ENCODE measurements at regions of chr12 and their contacts with region 1.

Region 1: DNA sequence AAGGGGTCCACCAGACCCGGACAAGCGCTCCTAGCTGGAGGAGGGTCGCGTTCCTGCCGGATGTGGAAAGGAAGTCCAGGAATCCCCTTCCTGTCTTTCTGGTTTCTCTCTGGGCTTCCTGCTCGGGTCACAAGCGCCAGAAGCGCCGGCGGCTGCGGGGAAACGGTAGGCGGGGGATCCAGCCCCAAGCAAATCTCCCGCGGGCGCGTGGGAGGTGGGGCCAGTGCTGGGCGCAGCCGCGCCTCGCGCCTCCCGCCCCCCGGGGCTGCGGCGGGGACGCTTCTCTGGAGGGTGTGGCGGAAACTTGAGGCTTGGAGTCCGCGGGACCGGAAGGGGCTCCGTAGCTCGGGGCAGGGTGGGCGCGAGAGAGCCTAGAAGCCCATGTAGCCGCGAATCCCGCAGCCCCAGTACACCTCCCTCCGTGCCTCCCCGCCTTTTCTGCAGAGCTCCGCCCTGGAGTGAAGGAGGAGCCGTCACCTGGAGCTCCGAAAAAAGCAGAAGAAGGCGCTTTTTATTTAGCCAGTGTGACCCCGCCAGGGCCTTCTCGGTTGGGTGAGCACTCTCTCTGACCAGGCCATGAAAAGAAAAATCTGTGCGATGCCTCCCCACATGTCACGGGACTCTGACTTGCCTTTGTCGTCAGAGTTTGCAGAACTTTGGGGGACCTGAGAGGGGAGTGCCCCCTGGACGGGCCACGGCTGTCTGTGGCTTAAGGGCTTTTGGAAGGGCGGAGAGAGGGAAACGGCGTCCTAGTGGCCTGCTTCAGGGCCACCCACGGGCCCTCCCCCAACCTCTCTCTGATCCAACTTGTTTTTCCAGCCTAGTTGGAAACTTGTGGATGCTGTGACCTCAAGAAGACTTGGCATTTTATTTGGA is 21.4 kb upstream of the CLEC2D start:
- DNase-seq: peak; percentile 85 to 97
- H3K4me3 ChIP-seq: peak overlapping the region; percentile 81
- H3K27ac ChIP-seq: peak overlapping the region; percentile 88
- H3K4me1 ChIP-seq: peaks cover 40% of the 10 kb centered on the region
- H3K27me3 ChIP-seq: no peaks in the 10 kb centered on the region
- CTCF ChIP-seq: 0 out of 2 replicates have a peak, but pooled peaks have one; percentile 10

Region 2: GRCh38 chr12:9662500-9662899 is 14.4 kb after region 1 on chr12:
- CTCF ChIA-PET with region 1: no interaction called
- POLR2A ChIA-PET with region 1: interaction called, 12 read pairs
- intact Hi-C with region 1: loop called (anchors 1 kb)
- DNase-seq: peak; percentile 63 to 87
- H3K4me3 ChIP-seq: no peak overlapping the region
- H3K27ac ChIP-seq: peak overlapping the region; percentile 43
- H3K4me1 ChIP-seq: peaks cover 27% of the 10 kb centered on the region
- H3K27me3 ChIP-seq: no peaks in the 10 kb centered on the region
- CTCF ChIP-seq: no peak

Region 3: DNA sequence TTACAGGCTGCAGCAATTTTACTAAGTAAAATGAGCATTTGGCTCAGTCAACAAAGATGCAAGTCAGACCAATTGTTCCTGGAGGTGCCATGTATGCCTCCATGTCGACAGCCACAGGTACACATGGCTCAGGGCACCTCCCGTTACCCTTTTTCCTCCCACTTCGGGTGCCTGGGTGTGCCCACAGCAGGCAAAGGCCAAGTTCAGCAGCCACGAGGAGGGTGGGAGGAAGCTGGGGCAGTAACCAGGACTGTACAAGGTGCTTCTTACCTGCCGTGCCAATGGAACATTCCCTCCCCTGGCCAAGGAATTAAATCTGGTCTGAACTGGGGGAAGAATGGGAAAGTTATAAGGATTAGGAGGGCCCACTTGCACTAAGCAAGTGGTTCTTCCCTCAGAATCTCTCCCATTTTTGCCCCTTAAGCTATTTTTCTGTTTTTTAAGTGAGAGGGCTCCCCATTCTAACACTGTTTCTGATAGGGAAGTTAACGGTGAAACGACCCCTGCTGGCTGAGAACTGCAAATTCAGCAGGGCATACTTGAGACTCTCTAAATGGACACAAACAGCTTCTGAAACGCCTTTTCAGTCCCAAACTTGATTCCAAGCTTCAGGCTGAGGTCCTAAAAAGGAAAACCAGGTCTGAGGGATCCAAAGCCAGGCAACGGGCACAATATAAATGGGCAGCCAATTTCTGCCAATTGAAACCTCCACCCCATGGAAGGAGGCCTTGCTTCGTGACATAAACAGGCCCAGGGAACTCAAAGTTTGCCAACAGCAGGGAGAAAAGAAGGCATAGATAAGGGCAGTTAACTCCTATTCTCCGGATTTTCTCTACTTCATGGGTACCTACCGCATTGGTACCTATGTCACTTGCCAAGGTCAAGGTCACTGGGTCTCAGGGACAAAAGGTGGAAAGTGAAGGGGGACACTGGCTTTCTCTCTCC is 60.1 kb after region 1 on chr12:
- CTCF ChIA-PET with region 1: no interaction called
- POLR2A ChIA-PET with region 1: interaction called, 6 read pairs
- intact Hi-C with region 1: loop called (anchors 5 kb)
- DNase-seq: peak in 1 of 2 experiments; percentile 21
- H3K4me3 ChIP-seq: no peak overlapping the region
- H3K27ac ChIP-seq: no peak overlapping the region
- H3K4me1 ChIP-seq: peaks cover 15% of the 10 kb centered on the region
- H3K27me3 ChIP-seq: no peaks in the 10 kb centered on the region
- CTCF ChIP-seq: peak; percentile 85

Region 4: GRCh38 chr12:9741726-9742125 is 93.7 kb after region 1 on chr12:
- CTCF ChIA-PET with region 1: no interaction called
- POLR2A ChIA-PET with region 1: interaction called, 6 read pairs
- intact Hi-C with region 1: loop called (anchors 1 kb)
- DNase-seq: no peak
- H3K4me3 ChIP-seq: no peak overlapping the region
- H3K27ac ChIP-seq: no peak overlapping the region
- H3K4me1 ChIP-seq: peaks cover 27% of the 10 kb centered on the region
- H3K27me3 ChIP-seq: no peaks in the 10 kb centered on the region
- CTCF ChIP-seq: no peak

Region 5: GRCh38 chr12:10167588-10167987 is 519.5 kb after region 1 on chr12:
- CTCF ChIA-PET with region 1: no interaction called
- POLR2A ChIA-PET with region 1: interaction called, 10 read pairs
- intact Hi-C with region 1: no loop called
- DNase-seq: no peak
- H3K4me3 ChIP-seq: no peak overlapping the region
- H3K27ac ChIP-seq: no peak overlapping the region
- H3K4me1 ChIP-seq: peaks cover 36% of the 10 kb centered on the region
- H3K27me3 ChIP-seq: no peaks in the 10 kb centered on the region
- CTCF ChIP-seq: no peak